Activated B cell treated with CpG ODN at 0.5 μM for 24 hours (primary cell): ENCODE measurements at regions of chr4 and their contacts with region 1.

Region 1: GRCh38 chr4:77765720-77766119 is 53.4 kb downstream of the CNOT6L start:
- DNase-seq: no peak
- ATAC-seq: no peak
- H3K4me3 Mint-ChIP-seq: no peak overlapping the region
- H3K27ac Mint-ChIP-seq: no peak overlapping the region
- H3K4me1 Mint-ChIP-seq: peaks cover 1% of the 10 kb centered on the region
- H3K27me3 Mint-ChIP-seq: no peaks in the 10 kb centered on the region
- CTCF ChIP-seq: no peak

Region 2: DNA sequence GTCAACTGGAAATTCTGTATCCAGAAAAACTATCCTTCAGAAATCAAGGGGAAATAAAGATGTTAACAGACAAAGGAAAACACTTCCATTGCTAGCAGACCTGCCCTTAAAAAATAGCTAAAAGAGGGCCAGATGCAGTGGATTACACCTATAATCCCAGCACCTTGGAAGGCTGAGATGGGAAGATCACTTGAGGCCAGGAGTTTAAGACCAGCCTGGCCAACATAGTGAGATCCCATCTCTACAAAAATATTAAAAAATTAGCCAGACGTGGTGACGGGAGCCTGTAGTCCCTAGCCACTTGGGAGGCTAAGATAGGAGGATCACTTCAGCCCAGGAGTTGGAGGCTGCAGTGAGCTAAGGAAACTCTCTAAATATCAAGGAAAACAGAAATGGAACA is 14.0 kb before region 1 on chr4:
- CTCF ChIA-PET with region 1: no interaction called
- POLR2A ChIA-PET with region 1: interaction called, 10 read pairs
- intact Hi-C with region 1: no loop called
- DNase-seq: no peak
- ATAC-seq: no peak
- H3K4me3 Mint-ChIP-seq: no peak overlapping the region
- H3K27ac Mint-ChIP-seq: no peak overlapping the region
- H3K4me1 Mint-ChIP-seq: no peaks in the 10 kb centered on the region
- H3K27me3 Mint-ChIP-seq: no peaks in the 10 kb centered on the region
- CTCF ChIP-seq: no peak

Region 3: GRCh38 chr4:77800483-77801259 is 35.0 kb after region 1 on chr4:
- CTCF ChIA-PET with region 1: no interaction called
- POLR2A ChIA-PET with region 1: interaction called, 17 read pairs
- intact Hi-C with region 1: no loop called
- DNase-seq: no peak
- ATAC-seq: no peak
- H3K4me3 Mint-ChIP-seq: peak overlapping the region; percentile 17
- H3K27ac Mint-ChIP-seq: peak overlapping the region; percentile 39
- H3K4me1 Mint-ChIP-seq: peaks cover 60% of the 10 kb centered on the region
- H3K27me3 Mint-ChIP-seq: no peaks in the 10 kb centered on the region
- CTCF ChIP-seq: no peak

Region 4: DNA sequence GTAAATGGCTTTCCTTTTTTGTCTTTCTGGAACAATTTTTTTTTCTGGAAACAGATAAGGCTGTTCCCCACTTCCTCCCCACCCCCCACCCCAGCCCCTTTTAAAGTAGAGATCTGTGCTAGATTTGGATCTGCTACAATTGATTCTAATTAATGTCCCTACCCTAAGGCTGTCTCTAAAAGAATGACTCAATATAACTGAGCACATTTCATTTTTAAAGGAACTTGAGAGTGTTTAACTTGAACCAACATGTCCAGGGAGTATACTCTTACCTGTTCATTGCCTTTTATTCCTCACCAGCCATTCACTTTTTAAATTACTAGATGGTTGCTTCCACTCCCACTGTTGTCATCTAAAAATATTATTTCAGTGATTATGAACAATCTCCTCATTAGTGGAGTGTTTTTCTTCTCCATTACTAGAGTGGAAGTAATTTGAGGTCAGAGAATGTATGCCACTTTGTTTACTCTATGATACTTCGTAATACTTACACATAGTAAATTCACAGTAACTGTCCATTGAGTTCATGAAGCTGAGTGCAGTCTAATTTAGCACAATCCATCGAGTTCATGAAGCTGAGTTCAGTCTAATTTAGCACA is 67.5 kb after region 1 on chr4:
- CTCF ChIA-PET with region 1: no interaction called
- POLR2A ChIA-PET with region 1: no interaction called
- intact Hi-C with region 1: no loop called
- DNase-seq: no peak
- ATAC-seq: no peak
- H3K4me3 Mint-ChIP-seq: no peak overlapping the region
- H3K27ac Mint-ChIP-seq: no peak overlapping the region
- H3K4me1 Mint-ChIP-seq: peaks cover 5% of the 10 kb centered on the region
- H3K27me3 Mint-ChIP-seq: no peaks in the 10 kb centered on the region
- CTCF ChIP-seq: no peak